Panc1 (cell line): ENCODE measurements at regions of chr18 and their contacts with region 1.

Region 1: GRCh38 chr18:24118750-24119577 is 19.9 kb upstream of the CABYR start:
- DNase-seq: no peak
- ATAC-seq: peak; percentile 87
- H3K4me3 ChIP-seq: no peak overlapping the region
- H3K27ac ChIP-seq: no peak overlapping the region
- H3K4me1 ChIP-seq: no peaks in the 10 kb centered on the region
- H3K27me3 ChIP-seq: no peaks in the 10 kb centered on the region
- CTCF ChIP-seq: peak; percentile 88

Region 2: DNA sequence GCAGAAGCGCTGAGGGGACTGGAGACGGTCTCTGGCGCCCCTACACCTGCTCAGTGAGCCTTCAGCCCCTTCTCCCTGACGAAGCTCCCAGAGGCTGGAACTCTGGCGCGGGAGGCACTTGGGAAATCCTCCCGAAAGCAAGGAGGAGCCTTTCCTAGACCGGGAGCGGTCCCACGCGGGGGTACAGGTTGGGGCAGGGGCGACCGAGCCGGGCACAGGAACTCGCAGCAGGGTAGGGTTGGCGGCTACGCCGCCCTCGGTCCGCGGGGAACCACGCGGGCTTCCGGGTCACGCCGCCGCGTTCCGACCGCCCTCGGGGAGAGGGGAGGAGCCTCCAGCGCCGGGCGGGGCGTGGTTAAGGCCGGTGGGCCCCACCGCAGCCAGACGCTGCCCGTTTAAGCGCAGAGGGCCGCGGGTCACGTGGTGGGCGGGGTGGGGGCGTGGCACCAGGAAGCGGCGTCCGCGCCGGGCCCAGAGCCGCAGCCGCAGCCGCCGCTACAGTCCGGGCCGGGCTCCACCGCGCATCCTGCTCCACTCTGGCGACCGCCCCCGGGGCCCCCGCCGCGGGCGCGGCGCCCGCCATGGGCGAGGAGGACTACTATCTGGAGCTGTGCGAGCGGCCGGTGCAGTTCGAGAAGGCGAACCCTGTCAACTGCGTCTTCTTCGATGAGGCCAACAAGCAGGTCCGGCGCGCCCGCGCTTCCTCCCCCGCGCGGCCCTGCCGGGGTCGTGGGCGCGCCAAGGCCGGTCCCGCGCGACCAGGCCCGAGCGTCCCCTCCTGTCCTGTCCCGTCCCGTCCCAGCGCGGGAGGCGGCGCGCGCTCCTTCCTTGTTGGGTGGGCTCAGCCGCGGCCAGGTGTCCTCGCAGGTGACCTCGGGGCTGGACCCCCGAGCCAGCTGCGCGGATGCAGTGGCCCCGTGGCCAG is 615.7 kb before region 1 on chr18 and contains the start of gene RMC1:
- CTCF ChIA-PET with region 1: no interaction called
- POLR2A ChIA-PET with region 1: no interaction called
- in situ Hi-C with region 1: no loop called
- intact Hi-C with region 1: no loop called
- DNase-seq: no peak
- ATAC-seq: peak; percentile 94
- H3K4me3 ChIP-seq: peak within 1 kb of the TSS; percentile 81 to 90
- H3K27ac ChIP-seq: peak within 1 kb of the TSS; percentile 92
- H3K4me1 ChIP-seq: peaks cover 15% of the 10 kb centered on the region
- H3K27me3 ChIP-seq: no peaks in the 10 kb centered on the region
- CTCF ChIP-seq: peak; percentile 50; the same call in 1 of the 2 replicates
- total RNA-seq, gene RMC1: 57.4 TPM

Region 3: GRCh38 chr18:23824240-23824639 is 294.7 kb before region 1 on chr18:
- CTCF ChIA-PET with region 1: no interaction called
- POLR2A ChIA-PET with region 1: no interaction called
- in situ Hi-C with region 1: no loop called
- intact Hi-C with region 1: loop called (anchors 5 kb)
- DNase-seq: no peak
- ATAC-seq: no peak
- H3K4me3 ChIP-seq: no peak overlapping the region
- H3K27ac ChIP-seq: no peak overlapping the region
- H3K4me1 ChIP-seq: no peaks in the 10 kb centered on the region
- H3K27me3 ChIP-seq: no peaks in the 10 kb centered on the region; the same call in 1 of the 2 replicates
- CTCF ChIP-seq: peak; percentile 20; the same call in 1 of the 2 replicates

Region 4: DNA sequence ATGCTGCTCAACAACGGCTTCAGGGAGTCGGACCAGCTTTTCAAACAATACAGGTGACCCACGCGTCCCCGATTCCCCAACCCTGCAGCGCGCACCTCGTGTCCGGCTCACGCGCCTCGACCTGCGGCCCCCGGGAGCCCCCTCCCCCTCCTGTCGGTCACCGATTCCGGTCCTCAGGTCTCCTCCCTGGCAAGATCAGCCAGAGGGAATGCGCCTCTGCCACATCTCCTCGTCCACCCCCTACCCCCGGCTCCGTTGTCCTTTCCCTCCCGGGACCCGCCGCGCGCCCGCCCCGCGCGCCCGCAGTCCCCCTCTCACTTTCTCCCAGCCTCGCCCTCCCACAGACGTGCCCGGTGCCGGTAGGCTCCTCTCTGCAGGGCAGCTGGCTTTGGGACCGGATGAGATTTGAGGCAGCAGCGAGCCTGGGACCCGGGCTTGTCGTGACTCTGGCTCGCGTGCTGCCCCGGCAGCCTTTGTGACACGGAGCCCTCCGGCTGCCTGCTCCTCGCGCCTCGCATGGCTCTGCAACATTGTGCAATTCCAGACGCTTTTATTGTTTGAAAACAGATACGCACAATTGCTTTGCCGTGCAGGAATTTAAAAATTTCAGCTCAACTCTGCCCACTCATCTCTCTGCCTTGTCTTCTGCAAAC is 103.9 kb before region 1 on chr18:
- CTCF ChIA-PET with region 1: no interaction called
- POLR2A ChIA-PET with region 1: no interaction called
- in situ Hi-C with region 1: no loop called
- intact Hi-C with region 1: loop called (anchors 5 kb)
- DNase-seq: no peak
- ATAC-seq: peak; percentile 40
- H3K4me3 ChIP-seq: peak overlapping the region; percentile 73 to 74
- H3K27ac ChIP-seq: peak overlapping the region; percentile 44
- H3K4me1 ChIP-seq: peaks cover 16% of the 10 kb centered on the region
- H3K27me3 ChIP-seq: peaks cover 9% of the 10 kb centered on the region; the same call in 1 of the 2 replicates
- CTCF ChIP-seq: no peak